GM12878 (cell line): ENCODE measurements at regions of chr12 and their contacts with region 1.

Region 1: DNA sequence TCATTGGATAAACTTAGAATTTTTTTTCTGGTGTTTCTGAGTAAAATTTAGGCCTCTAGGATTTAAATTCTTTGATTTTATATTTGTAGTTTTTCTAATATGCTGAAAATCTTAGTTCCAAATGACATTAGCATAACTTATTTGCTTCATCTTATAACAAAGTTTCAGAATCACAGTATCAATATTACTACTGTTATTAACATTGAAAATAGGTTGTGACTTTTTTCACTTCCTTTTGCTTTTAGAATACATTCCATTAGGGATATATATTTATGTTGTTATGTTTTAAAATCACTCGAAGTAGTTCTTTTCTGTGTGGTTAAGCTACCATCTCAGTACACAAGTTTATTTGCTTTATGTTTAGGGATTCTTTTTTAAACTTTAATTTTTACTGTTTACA is 12.8 kb downstream of the RAB3IP start:
- DNase-seq: no peak
- ATAC-seq: peak; percentile 29; the same call in 1 of the 3 replicates
- H3K4me3 ChIP-seq: no peak overlapping the region
- H3K27ac ChIP-seq: no peak overlapping the region
- H3K4me1 ChIP-seq: peaks cover 3% of the 10 kb centered on the region; the same call in 1 of the 2 replicates
- H3K27me3 ChIP-seq: no peaks in the 10 kb centered on the region
- CTCF ChIP-seq: no peak
- EP300 ChIP-seq: no peak
- POLR2A ChIP-seq: no peak
- RAD21 ChIP-seq: no peak

Region 2: GRCh38 chr12:69708649-69709048 is 42.8 kb before region 1 on chr12:
- CTCF ChIA-PET with region 1: no interaction called
- POLR2A ChIA-PET with region 1: no interaction called
- RAD21 ChIA-PET with region 1: no interaction called
- SMC1A ChIA-PET with region 1: no interaction called
- in situ Hi-C with region 1: no loop called
- intact Hi-C with region 1: no loop called
- DNase-seq: no peak
- ATAC-seq: no peak
- H3K4me3 ChIP-seq: no peak overlapping the region
- H3K27ac ChIP-seq: no peak overlapping the region
- H3K4me1 ChIP-seq: no peaks in the 10 kb centered on the region
- H3K27me3 ChIP-seq: no peaks in the 10 kb centered on the region
- CTCF ChIP-seq: no peak
- EP300 ChIP-seq: no peak
- POLR2A ChIP-seq: no peak
- RAD21 ChIP-seq: no peak

Region 3: DNA sequence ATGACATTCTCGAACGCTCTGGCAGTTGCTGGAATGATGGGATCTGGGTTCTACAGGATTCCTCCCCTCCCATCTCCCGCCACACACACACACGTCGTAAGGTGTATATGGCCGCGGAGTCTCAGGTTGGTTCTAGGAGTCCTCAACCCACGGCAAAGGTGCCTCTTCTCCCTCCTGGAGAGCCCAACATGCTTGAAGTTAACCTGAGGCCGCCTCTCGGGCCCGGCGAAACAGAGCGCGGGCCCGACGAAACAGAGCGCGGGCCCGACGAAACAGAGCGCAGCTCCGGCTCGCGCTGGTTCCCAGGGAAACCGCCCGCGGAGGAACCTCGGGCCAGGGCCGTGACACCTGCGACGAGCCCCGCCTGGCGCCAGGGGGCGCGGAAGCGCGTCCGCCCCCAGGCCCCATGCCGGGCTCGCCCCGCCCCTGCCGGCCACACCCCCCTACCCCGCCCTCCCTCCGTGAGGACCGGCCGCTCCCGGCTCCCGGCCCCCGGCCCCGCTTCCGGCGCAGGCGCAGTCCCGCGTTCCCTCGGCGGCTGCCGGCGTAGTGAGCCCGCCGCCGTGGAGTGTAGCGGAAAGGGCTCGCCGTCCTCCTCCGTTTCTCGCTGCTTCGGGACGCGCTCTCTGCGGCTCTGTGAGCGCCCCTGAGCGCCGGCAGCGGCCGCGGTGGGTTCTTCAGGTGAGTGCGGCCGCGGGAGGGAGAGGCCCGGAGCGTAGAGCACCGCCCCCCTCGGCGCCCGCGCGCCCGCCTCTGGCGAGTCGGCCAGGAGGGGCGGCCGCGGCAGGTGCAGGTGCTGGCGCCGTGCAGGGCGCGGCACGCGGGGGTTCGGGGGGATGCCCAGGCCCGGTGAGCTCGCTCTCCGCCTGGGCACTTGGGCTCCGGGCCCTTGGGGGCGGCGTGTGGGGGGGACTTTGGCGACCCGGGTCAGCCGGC is 12.9 kb before region 1 on chr12 and contains the start of gene RAB3IP:
- CTCF ChIA-PET with region 1: interaction called, 14 read pairs
- POLR2A ChIA-PET with region 1: interaction called, 9 read pairs
- RAD21 ChIA-PET with region 1: interaction called, 3 read pairs
- SMC1A ChIA-PET with region 1: interaction called, 4 read pairs
- in situ Hi-C with region 1: no loop called
- intact Hi-C with region 1: no loop called
- DNase-seq: peak; percentile 51
- ATAC-seq: peak; percentile 88
- H3K4me3 ChIP-seq: peak within 1 kb of the TSS; percentile 77
- H3K27ac ChIP-seq: peak within 1 kb of the TSS; percentile 74
- H3K4me1 ChIP-seq: peaks cover 3% of the 10 kb centered on the region; the same call in 1 of the 2 replicates
- H3K27me3 ChIP-seq: no peaks in the 10 kb centered on the region
- CTCF ChIP-seq: peak; percentile 52 to 81 (median 64); a peak in 5 of 6 replicates
- EP300 ChIP-seq: peak in 1 of 2 experiments; percentile 1; a peak in 1 of 4 replicates
- POLR2A ChIP-seq: peak; percentile 69
- RAD21 ChIP-seq: no peak
- polyA plus RNA-seq, gene RAB3IP: 22.4 to 30.9 TPM

Region 4: GRCh38 chr12:70068743-70069142 is 317.3 kb after region 1 on chr12:
- CTCF ChIA-PET with region 1: no interaction called
- POLR2A ChIA-PET with region 1: no interaction called
- RAD21 ChIA-PET with region 1: no interaction called
- SMC1A ChIA-PET with region 1: no interaction called
- in situ Hi-C with region 1: no loop called
- intact Hi-C with region 1: no loop called
- DNase-seq: no peak
- ATAC-seq: peak; percentile 41; the same call in 1 of the 3 replicates
- H3K4me3 ChIP-seq: no peak overlapping the region
- H3K27ac ChIP-seq: no peak overlapping the region
- H3K4me1 ChIP-seq: no peaks in the 10 kb centered on the region
- H3K27me3 ChIP-seq: no peaks in the 10 kb centered on the region
- CTCF ChIP-seq: no peak
- EP300 ChIP-seq: no peak
- POLR2A ChIP-seq: no peak
- RAD21 ChIP-seq: no peak